GM18951 (cell line): ENCODE measurements at regions of chr1 and their contacts with region 1.

Region 1: GRCh38 chr1:16727190-16728111 is 12.9 kb upstream of the RNU1-4 start:
- POLR2A ChIP-seq: no peak

Region 2: DNA sequence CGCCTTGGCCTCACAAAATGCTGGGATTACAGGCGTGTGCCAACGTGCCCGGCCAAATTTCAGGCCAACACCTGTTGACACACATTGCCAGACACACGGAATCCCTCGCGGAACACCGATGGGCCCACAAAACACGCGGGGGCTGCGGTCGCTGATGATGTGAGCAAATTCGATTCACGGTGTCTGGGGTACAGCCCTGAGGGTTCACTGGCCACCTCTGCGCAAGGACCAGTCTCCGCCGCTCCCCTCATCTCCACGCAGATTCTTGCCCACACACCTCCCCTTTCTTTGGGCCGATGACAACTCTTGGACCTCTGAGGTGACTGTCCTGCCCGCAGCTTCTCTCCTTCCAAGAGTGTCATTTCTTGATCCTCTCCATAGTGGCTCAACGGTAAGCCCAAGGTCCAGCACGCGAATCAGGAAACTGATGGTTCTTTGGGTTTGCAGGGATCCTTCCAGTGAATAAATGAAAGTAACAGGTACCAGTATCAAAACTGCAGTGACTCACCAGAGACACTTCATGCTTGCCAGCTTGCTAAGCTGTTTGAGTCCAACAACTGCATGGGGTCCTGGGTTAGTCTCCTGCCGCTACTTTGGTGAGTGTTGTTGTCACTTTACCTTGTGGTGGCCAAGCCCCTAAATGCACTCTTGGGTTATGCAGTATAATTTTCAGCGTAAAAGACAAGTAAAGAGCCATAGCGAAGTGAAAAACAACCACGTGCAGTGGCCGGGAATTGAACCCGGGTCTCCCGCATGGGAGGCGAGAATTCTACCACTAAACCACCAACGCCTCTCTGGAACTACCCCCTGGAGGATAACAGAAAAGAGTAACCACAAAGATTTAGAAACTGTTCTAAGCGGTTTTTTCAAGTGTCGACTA is 49.7 kb before region 1 on chr1:
- in situ Hi-C with region 1: loop called (anchors 5 kb)
- POLR2A ChIP-seq: no peak

Region 3: GRCh38 chr1:16883008-16883407 is 155.6 kb after region 1 on chr1:
- in situ Hi-C with region 1: loop called (anchors 5 kb)
- POLR2A ChIP-seq: no peak